ENCODE measurements at regions of chr1 and their contacts with region 1.

Region 1: GRCh38 chr1:30756545-30757195 is 904 bp downstream of the LAPTM5 start:
- DNase-seq: peak; percentile 52 to 92 (median 80)
- ATAC-seq: peak; percentile 59
- H3K4me3 ChIP-seq: peak overlapping the region; percentile 70 to 87
- H3K4me3 Mint-ChIP-seq: peak overlapping the region; percentile 97
- H3K27ac ChIP-seq: peak overlapping the region; percentile 78 to 92
- H3K27ac Mint-ChIP-seq: peak overlapping the region; percentile 99
- H3K4me1 ChIP-seq: peaks cover 72% of the 10 kb centered on the region
- H3K4me1 Mint-ChIP-seq: peaks cover 86% of the 10 kb centered on the region
- H3K27me3 ChIP-seq: no peaks in the 10 kb centered on the region
- H3K27me3 Mint-ChIP-seq: no peaks in the 10 kb centered on the region
- CTCF ChIP-seq: no peak

Region 2: DNA sequence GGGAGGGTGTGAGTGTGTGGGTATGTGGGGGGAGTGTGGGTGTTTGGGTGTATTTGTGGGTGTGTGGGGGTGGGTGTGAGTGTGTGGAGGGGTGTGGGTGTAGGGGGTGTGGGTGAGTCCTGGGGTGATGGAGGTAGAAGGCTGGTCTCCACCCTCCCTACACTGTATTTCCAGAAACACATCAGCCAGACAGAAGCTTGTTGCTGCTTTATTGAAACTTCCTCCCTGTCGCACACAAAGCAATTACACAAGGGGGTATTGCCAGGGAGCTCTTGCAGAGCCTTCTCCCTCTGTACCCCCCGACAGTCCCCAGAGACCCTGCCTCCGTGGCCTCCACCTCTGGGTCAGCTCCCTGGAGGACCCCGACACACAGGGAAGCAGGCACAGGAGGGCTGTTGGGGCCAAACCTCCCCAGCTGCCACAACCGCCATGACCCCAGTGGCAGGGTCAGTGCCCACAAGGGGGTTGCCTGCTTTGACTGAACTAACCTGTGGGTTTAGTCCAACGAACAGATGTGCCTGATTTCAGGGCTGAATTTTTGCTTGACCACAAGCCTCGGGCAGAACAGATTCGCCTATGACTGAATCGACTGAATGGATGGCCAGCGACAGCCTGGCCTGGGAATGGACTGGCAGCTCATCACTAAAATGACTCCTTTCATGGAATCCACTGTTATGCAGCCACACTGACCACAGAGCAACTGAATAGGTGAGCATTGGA is 24.2 kb before region 1 on chr1:
- CTCF ChIA-PET with region 1: interaction called, 12 read pairs
- POLR2A ChIA-PET with region 1: interaction called, 326 read pairs
- intact Hi-C with region 1: no loop called
- DNase-seq: peak in 2 of 9 experiments; percentile 53 to 68
- ATAC-seq: peak; percentile 69
- H3K4me3 ChIP-seq: no peak overlapping the region
- H3K4me3 Mint-ChIP-seq: no peak overlapping the region
- H3K27ac ChIP-seq: peak overlapping the region; percentile 10 to 56
- H3K27ac Mint-ChIP-seq: peak overlapping the region; percentile 76
- H3K4me1 ChIP-seq: peaks cover 13% of the 10 kb centered on the region
- H3K4me1 Mint-ChIP-seq: peaks cover 32% of the 10 kb centered on the region
- H3K27me3 ChIP-seq: no peaks in the 10 kb centered on the region
- H3K27me3 Mint-ChIP-seq: no peaks in the 10 kb centered on the region
- CTCF ChIP-seq: no peak

Region 3: GRCh38 chr1:30847358-30847972 is 90.8 kb after region 1 on chr1:
- CTCF ChIA-PET with region 1: no interaction called
- POLR2A ChIA-PET with region 1: no interaction called
- intact Hi-C with region 1: no loop called
- DNase-seq: no peak
- ATAC-seq: no peak
- H3K4me3 ChIP-seq: no peak overlapping the region
- H3K4me3 Mint-ChIP-seq: no peak overlapping the region
- H3K27ac ChIP-seq: no peak overlapping the region
- H3K27ac Mint-ChIP-seq: no peak overlapping the region
- H3K4me1 ChIP-seq: no peaks in the 10 kb centered on the region
- H3K4me1 Mint-ChIP-seq: no peaks in the 10 kb centered on the region
- H3K27me3 ChIP-seq: peaks cover 0 to 3% of the 10 kb centered on the region in 2 experiments
- H3K27me3 Mint-ChIP-seq: peaks cover 61% of the 10 kb centered on the region
- CTCF ChIP-seq: no peak